H1 (cell line): ENCODE measurements at regions of chr9 and their contacts with region 1.

Region 1: DNA sequence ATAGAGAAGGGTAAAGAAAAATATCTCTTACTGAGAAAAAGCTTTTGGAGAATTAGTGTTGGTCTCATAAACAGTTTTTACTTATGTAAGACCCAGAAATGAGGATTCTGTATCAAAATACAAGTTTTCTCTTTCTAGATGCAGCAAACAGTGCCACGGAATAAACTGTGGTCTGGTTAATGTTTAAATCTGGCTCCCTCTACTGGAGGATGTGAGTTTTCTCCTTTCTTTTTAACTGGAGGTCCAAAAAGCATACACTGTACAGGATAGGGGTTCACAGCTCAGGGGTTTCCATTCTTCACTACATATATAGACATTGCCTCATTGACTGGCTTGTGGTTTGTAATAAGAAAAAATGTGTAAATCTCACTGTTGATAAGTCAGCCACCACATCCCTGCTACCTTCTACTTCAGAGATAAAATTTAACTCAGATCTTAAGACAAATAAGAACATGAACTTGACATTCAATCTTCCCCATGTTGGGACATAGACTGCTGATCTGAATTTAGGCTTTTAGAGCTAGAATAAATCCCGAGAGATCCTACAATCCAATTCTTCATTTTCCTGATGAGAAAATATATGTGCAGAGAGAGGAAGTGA is 98.9 kb downstream of the CFAP95 start:
- DNase-seq: no peak
- H3K4me3 ChIP-seq: no peak overlapping the region
- H3K27ac ChIP-seq: no peak overlapping the region
- H3K4me1 ChIP-seq: peaks cover 0 to 6% (median 0%) of the 10 kb centered on the region in 4 experiments; a peak in 1 of 7 replicates
- H3K27me3 ChIP-seq: no peaks in the 10 kb centered on the region
- CTCF ChIP-seq: peak in 2 of 3 experiments; percentile 67 to 75; a peak in 3 of 4 replicates
- EP300 ChIP-seq: no peak
- POLR2A ChIP-seq: no peak
- RAD21 ChIP-seq: peak; percentile 78 to 82

Region 2: GRCh38 chr9:69745716-69746437 is 173.7 kb before region 1 on chr9:
- CTCF ChIA-PET with region 1: interaction called, 10 read pairs
- POLR2A ChIA-PET with region 1: no interaction called
- DNase-seq: no peak
- H3K4me3 ChIP-seq: no peak overlapping the region
- H3K27ac ChIP-seq: no peak overlapping the region
- H3K4me1 ChIP-seq: peaks cover 0 to 2% (median under 1%) of the 10 kb centered on the region in 4 experiments; a peak in 1 of 7 replicates
- H3K27me3 ChIP-seq: no peaks in the 10 kb centered on the region
- CTCF ChIP-seq: peak in 2 of 3 experiments; percentile 24 to 39; a peak in 3 of 4 replicates
- EP300 ChIP-seq: no peak
- POLR2A ChIP-seq: no peak
- RAD21 ChIP-seq: peak; percentile 64 to 71

Region 3: DNA sequence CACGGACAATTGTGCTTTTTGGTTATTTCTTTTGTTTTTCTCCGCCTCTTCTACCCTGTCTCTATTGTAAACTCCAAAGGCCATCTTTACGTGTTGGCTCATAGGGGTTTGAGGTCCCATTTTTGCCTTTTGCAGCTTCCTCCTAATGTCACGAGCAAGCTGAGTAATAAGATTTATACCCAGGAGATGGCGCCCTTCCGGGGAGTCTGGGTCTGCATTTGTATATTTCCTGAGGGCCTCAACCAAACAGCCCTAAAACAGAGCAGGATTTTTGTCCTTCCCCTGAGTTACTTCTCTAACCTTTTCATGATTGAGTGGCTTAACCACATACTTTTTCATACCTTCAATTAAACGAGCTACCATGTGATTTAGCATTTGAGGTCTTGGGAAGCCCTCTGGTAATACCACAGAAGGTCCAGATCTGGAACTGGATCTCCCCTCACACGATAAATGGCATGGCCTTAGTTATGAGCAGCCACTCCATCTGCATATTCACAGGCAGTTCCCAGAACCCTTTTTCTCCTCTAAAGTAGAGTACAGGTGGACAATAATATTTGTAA is 110.2 kb before region 1 on chr9:
- CTCF ChIA-PET with region 1: interaction called, 10 read pairs
- POLR2A ChIA-PET with region 1: no interaction called
- DNase-seq: peak; percentile 19 to 75
- H3K4me3 ChIP-seq: no peak overlapping the region
- H3K27ac ChIP-seq: no peak overlapping the region
- H3K4me1 ChIP-seq: no peaks in the 10 kb centered on the region
- H3K27me3 ChIP-seq: no peaks in the 10 kb centered on the region
- CTCF ChIP-seq: peak; percentile 25 to 64 (median 58)
- EP300 ChIP-seq: no peak
- POLR2A ChIP-seq: no peak
- RAD21 ChIP-seq: peak; percentile 47 to 70

Region 4: GRCh38 chr9:69891696-69892095 is 27.9 kb before region 1 on chr9:
- CTCF ChIA-PET with region 1: interaction called, 13 read pairs
- POLR2A ChIA-PET with region 1: no interaction called
- DNase-seq: no peak
- H3K4me3 ChIP-seq: no peak overlapping the region
- H3K27ac ChIP-seq: no peak overlapping the region
- H3K4me1 ChIP-seq: no peaks in the 10 kb centered on the region
- H3K27me3 ChIP-seq: no peaks in the 10 kb centered on the region
- CTCF ChIP-seq: no peak
- EP300 ChIP-seq: no peak
- POLR2A ChIP-seq: no peak
- RAD21 ChIP-seq: no peak

Region 5: DNA sequence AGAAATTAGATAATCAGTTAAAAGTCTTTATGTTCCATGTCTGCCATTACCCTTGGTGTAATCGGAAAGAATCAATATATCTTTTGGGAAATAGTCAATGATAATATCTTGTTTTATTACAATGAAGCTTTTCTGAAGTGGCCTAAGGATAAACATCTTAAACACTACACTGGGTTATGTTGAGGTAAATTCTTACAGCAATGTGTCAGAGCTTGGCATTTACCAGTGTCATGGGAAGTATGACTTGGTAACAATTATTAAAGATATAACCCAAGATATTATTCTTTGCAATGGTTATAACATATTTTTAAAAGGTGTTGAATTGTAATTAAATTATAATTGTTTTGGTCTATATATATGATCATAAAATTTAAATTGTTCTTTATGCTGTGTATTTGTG is 14.3 kb before region 1 on chr9:
- CTCF ChIA-PET with region 1: interaction called, 11 read pairs
- POLR2A ChIA-PET with region 1: no interaction called
- DNase-seq: no peak
- H3K4me3 ChIP-seq: no peak overlapping the region
- H3K27ac ChIP-seq: no peak overlapping the region
- H3K4me1 ChIP-seq: no peaks in the 10 kb centered on the region
- H3K27me3 ChIP-seq: no peaks in the 10 kb centered on the region
- CTCF ChIP-seq: no peak
- EP300 ChIP-seq: no peak
- POLR2A ChIP-seq: no peak
- RAD21 ChIP-seq: no peak

Region 6: GRCh38 chr9:69931340-69931739 is 11.8 kb after region 1 on chr9:
- CTCF ChIA-PET with region 1: interaction called, 25 read pairs
- POLR2A ChIA-PET with region 1: no interaction called
- DNase-seq: no peak
- H3K4me3 ChIP-seq: no peak overlapping the region
- H3K27ac ChIP-seq: no peak overlapping the region
- H3K4me1 ChIP-seq: no peaks in the 10 kb centered on the region
- H3K27me3 ChIP-seq: no peaks in the 10 kb centered on the region
- CTCF ChIP-seq: peak in 2 of 3 experiments; percentile 55 to 58; a peak in 3 of 4 replicates
- EP300 ChIP-seq: no peak
- POLR2A ChIP-seq: no peak
- RAD21 ChIP-seq: peak; percentile 72 to 75